PC-9 (cell line): ENCODE measurements at regions of chr3 and their contacts with region 1.

Region 1: DNA sequence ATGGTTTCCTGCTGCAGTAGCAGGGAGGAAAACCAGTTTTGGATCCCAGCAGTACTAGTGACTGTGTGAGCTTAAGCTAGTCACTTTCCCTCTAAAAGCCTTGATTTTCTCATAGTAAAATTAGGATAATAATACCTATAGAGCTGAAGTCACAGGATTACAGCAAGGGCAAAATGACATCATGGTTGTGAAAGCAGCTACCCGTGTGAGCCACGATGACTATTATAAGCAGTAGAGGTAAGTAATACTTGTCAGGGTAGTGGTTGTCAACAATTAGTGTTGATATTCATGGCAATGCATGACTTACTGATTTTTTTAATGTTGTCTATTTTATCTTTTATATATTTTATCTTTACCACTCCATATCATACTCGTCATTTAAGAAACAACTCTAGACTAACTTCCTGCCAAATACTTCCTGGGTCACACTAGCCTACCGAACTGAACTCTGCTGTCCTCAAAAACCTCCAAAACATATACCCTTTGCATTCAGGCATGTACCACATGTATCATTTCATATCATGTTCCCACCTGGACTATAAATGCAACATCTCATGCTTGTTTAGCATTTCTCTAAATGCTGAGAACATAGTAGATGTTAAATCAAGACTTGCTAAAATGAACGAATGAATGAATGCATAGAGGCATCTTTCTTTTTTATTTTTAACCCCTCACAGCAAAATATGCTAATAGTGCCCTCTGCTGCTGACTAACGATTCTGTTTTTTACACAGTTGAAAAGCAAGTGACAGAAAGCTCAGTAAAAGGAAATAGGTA is 172.6 kb downstream of the P3H2 start:
- DNase-seq: peak; percentile 40 to 56
- H3K4me3 ChIP-seq: no peak overlapping the region
- H3K27ac ChIP-seq: peak overlapping the region; percentile 39
- H3K4me1 ChIP-seq: peaks cover 42% of the 10 kb centered on the region
- H3K27me3 ChIP-seq: no peaks in the 10 kb centered on the region
- CTCF ChIP-seq: peak; percentile 94

Region 2: DNA sequence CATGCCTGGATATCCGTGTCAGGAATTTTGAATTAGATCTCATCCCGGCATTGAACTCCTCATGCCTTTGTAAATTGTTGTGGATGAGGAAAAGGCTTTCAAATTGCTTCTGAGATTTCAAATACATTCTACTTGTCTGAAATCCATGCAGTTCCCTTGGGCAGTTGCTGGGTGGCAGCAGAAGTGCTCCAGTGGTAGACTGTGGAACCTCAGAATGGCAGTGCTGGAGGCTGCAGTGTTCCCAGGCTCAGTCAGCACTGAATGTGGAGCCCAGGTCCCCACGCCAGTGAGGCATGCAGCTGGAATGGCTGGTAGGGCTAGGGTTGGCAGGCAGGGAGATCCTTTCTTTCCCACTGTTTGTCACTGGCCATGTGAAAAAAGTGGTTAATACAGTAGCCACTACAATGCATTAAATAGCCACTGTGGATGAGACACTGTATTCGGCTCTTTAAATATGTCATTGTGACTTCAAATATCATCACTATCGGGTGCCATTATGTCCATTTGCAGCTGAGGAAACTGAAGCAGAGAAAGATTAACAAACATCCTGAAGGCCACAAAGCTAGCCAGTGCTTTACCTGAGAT is 677.8 kb before region 1 on chr3:
- CTCF ChIA-PET with region 1: interaction called, 7 read pairs
- POLR2A ChIA-PET with region 1: no interaction called
- intact Hi-C with region 1: loop called (anchors 1 kb)
- DNase-seq: peak; percentile 83 to 86
- H3K4me3 ChIP-seq: no peak overlapping the region
- H3K27ac ChIP-seq: no peak overlapping the region
- H3K4me1 ChIP-seq: no peaks in the 10 kb centered on the region
- H3K27me3 ChIP-seq: no peaks in the 10 kb centered on the region
- CTCF ChIP-seq: peak; percentile 78

Region 3: GRCh38 chr3:189394599-189395121 is 553.5 kb before region 1 on chr3:
- CTCF ChIA-PET with region 1: no interaction called
- POLR2A ChIA-PET with region 1: no interaction called
- intact Hi-C with region 1: loop called (anchors 2 kb)
- DNase-seq: no peak
- H3K4me3 ChIP-seq: no peak overlapping the region
- H3K27ac ChIP-seq: peak overlapping the region; percentile 89
- H3K4me1 ChIP-seq: peaks cover 36% of the 10 kb centered on the region
- H3K27me3 ChIP-seq: no peaks in the 10 kb centered on the region
- CTCF ChIP-seq: no peak

Region 4: GRCh38 chr3:189573004-189573403 is 375.1 kb before region 1 on chr3:
- CTCF ChIA-PET with region 1: no interaction called
- POLR2A ChIA-PET with region 1: interaction called, 4 read pairs
- intact Hi-C with region 1: loop called (anchors 2 kb)
- DNase-seq: peak; percentile 26 to 39
- H3K4me3 ChIP-seq: no peak overlapping the region
- H3K27ac ChIP-seq: peak overlapping the region; percentile 91
- H3K4me1 ChIP-seq: peaks cover 30% of the 10 kb centered on the region
- H3K27me3 ChIP-seq: no peaks in the 10 kb centered on the region
- CTCF ChIP-seq: no peak

Region 5: GRCh38 chr3:189720736-189721417 is 227.3 kb before region 1 on chr3:
- CTCF ChIA-PET with region 1: interaction called, 11 read pairs
- POLR2A ChIA-PET with region 1: interaction called, 7 read pairs
- intact Hi-C with region 1: no loop called
- DNase-seq: no peak
- H3K4me3 ChIP-seq: no peak overlapping the region
- H3K27ac ChIP-seq: no peak overlapping the region
- H3K4me1 ChIP-seq: no peaks in the 10 kb centered on the region
- H3K27me3 ChIP-seq: no peaks in the 10 kb centered on the region
- CTCF ChIP-seq: no peak

Region 6: DNA sequence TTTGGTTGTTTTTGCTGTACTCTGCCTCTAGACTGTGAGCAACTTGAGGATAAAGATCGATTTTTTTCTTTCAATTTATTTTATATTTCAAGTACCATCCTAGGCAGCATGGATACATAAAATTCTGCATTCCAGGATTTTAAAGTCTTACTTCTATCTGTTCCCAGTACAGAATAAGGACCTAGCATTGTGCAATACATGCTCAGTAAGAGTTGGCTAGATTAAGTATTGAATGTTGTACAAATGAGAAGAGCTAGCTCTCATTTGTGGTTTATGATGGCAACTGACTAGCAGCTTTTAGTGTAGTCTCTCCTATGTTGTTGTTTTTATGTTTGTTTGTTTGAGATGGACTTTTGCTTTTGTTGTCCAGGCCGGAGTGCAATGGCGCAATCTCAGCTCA is 94.2 kb before region 1 on chr3:
- CTCF ChIA-PET with region 1: no interaction called
- POLR2A ChIA-PET with region 1: interaction called, 21 read pairs
- intact Hi-C with region 1: no loop called
- DNase-seq: peak in 1 of 2 experiments; percentile 28
- H3K4me3 ChIP-seq: no peak overlapping the region
- H3K27ac ChIP-seq: no peak overlapping the region
- H3K4me1 ChIP-seq: no peaks in the 10 kb centered on the region
- H3K27me3 ChIP-seq: no peaks in the 10 kb centered on the region
- CTCF ChIP-seq: no peak